ENCODE measurements at regions of chr16 and their contacts with region 1.

Region 1: DNA sequence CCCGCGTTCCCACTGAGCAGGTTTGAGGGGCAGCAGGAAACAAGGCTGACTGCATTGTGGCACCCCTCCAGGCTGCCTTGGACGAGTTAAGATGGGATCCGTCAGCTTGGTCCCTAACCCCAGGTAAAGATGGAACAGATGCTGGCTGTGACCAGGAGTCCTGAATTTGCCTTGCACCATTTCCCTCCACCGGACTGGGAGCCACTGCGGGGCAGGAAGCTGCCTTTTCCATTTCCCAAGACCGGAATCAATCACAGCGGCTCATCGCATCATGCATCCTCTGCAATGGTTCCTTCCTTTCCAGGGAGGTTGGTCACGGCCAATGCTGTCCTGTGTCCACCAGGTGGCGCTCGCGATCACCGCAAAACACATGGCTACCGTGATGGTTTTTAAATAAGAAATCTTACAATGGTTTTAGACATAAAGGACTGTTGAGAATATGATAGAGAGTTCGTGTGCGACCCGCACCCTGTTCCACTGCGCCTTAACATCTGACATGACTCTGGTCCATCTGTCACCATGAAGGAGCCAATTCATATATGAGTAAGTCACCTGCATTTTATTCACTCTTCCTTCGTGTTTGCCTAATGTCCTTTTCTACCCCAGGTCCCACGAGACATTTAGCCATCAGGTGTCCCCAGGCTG is 6.8 kb upstream of the MEAK7 start:
- DNase-seq: peak; percentile 65 to 89 (median 81)
- H3K4me3 ChIP-seq: peak overlapping the region; percentile 4
- H3K4me3 Mint-ChIP-seq: peak overlapping the region; percentile 7 to 57 (median 16)
- H3K27ac ChIP-seq: no peak overlapping the region
- H3K27ac Mint-ChIP-seq: peak overlapping the region in 7 of 8 donors; percentile 50 to 92 (median 83)
- H3K4me1 ChIP-seq: peaks cover 85% of the 10 kb centered on the region
- H3K4me1 Mint-ChIP-seq: peaks cover 57 to 71% (median 70%) of the 10 kb centered on the region in 3 donors
- H3K27me3 ChIP-seq: no peaks in the 10 kb centered on the region
- H3K27me3 Mint-ChIP-seq: peaks cover 0 to 4% of the 10 kb centered on the region in 2 donors

Region 2: DNA sequence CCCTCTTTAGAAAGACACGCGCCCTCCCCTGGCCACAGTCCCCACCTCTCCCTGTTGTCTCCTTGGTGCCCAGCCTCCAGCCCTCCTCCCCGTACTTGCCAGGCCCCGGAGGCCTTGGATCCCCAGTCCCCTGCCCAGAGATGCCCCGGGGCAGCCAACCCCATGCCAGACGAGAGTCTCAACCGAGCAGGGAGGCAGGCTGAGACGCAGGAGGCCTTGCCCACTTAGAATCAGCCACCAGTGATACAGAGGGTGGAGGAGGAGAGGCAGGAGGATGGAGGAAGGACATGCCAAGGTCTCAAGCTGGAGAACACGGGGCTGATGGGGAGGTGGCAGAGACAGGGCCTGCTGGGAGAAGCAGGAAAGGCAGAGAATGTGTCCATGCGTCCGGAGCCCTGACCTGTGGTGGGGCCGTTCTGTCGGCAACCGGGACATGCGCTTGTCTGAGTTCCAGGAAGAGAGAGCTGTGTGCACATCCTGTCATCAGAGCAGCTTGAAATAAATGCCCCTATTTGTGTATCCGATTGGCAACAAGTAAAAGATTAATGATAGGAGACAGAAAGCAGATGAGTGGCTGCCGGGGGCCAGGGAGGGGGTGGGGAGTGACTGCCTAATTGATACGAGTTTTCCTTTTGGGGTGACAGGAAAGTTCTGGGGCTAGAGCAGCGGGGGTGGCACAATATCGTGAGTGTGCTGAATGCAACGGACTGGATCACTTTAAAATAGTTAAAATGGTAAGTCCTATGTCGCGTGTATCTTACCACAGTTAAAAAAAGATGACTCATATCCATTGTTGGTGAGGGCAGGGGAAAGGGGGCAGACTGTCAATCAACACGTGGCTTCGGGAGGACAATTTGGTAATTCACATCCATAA is 37.9 kb after region 1 on chr16:
- CTCF ChIA-PET with region 1: interaction called, 11 read pairs
- POLR2A ChIA-PET with region 1: interaction called, 9 read pairs
- DNase-seq: peak; percentile 12 to 74 (median 49)
- H3K4me3 ChIP-seq: peak overlapping the region; percentile 51
- H3K4me3 Mint-ChIP-seq: peak overlapping the region; percentile 85 to 94 (median 89)
- H3K27ac ChIP-seq: peak overlapping the region; percentile 75
- H3K27ac Mint-ChIP-seq: peak overlapping the region; percentile 95 to 100 (median 97)
- H3K4me1 ChIP-seq: peaks cover 68% of the 10 kb centered on the region
- H3K4me1 Mint-ChIP-seq: peaks cover 49 to 79% (median 61%) of the 10 kb centered on the region in 3 donors
- H3K27me3 ChIP-seq: no peaks in the 10 kb centered on the region
- H3K27me3 Mint-ChIP-seq: no peaks in the 10 kb centered on the region

Region 3: DNA sequence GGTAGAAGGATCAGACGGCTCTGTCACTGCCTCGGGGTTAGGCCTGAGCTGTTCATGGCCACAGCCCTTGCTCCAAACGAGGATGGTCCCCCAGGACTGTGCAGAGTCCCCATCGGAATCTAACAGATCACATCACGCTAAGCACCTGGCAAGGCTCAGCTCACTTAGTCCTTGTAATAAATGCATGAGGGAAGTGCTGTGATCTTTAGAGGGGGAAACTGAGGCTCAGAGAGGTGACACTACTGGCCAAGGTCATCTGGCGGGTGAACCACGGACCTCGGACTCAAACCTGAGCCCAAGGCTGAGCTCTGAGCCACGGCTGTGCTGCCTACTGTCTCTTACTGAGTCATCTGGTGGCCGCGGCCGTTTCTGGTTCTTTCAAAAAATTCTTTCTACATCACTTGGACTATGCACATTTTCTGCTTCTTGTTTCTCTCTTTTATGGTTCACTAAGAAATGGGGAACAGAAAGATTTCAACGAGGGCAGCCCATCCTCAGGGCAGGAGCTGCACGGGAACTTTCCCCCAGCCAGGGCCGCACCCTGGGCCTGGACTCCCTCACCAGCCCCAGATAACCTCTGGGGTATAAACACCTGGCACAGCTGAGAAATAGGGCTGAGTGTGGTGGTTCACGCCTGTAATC is 51.0 kb after region 1 on chr16:
- CTCF ChIA-PET with region 1: interaction called, 10 read pairs
- POLR2A ChIA-PET with region 1: no interaction called
- DNase-seq: no peak
- H3K4me3 ChIP-seq: no peak overlapping the region
- H3K4me3 Mint-ChIP-seq: no peak overlapping the region
- H3K27ac ChIP-seq: no peak overlapping the region
- H3K27ac Mint-ChIP-seq: peak overlapping the region in 3 of 8 donors; percentile 5 to 66 (median 57)
- H3K4me1 ChIP-seq: no peaks in the 10 kb centered on the region
- H3K4me1 Mint-ChIP-seq: peaks cover 2 to 15% (median 14%) of the 10 kb centered on the region in 3 donors
- H3K27me3 ChIP-seq: no peaks in the 10 kb centered on the region
- H3K27me3 Mint-ChIP-seq: peaks cover 0 to 3% of the 10 kb centered on the region in 2 donors

Region 4: GRCh38 chr16:84575914-84576313 is 64.6 kb after region 1 on chr16:
- CTCF ChIA-PET with region 1: interaction called, 11 read pairs
- POLR2A ChIA-PET with region 1: no interaction called
- DNase-seq: no peak
- H3K4me3 ChIP-seq: no peak overlapping the region
- H3K4me3 Mint-ChIP-seq: no peak overlapping the region
- H3K27ac ChIP-seq: no peak overlapping the region
- H3K27ac Mint-ChIP-seq: peak overlapping the region in 7 of 8 donors; percentile 2 to 92 (median 74)
- H3K4me1 ChIP-seq: no peaks in the 10 kb centered on the region
- H3K4me1 Mint-ChIP-seq: peaks cover 57 to 86% (median 79%) of the 10 kb centered on the region in 3 donors
- H3K27me3 ChIP-seq: no peaks in the 10 kb centered on the region
- H3K27me3 Mint-ChIP-seq: no peaks in the 10 kb centered on the region

Region 5: GRCh38 chr16:84593825-84594724 is 82.8 kb after region 1 on chr16:
- CTCF ChIA-PET with region 1: interaction called, 20 read pairs
- POLR2A ChIA-PET with region 1: interaction called, 19 read pairs
- DNase-seq: peak; percentile 76 to 97 (median 83)
- H3K4me3 ChIP-seq: peak overlapping the region; percentile 53
- H3K4me3 Mint-ChIP-seq: peak overlapping the region; percentile 72 to 96 (median 88)
- H3K27ac ChIP-seq: peak overlapping the region; percentile 90
- H3K27ac Mint-ChIP-seq: peak overlapping the region; percentile 95 to 100 (median 99)
- H3K4me1 ChIP-seq: peaks cover 52% of the 10 kb centered on the region
- H3K4me1 Mint-ChIP-seq: peaks cover 64 to 85% (median 72%) of the 10 kb centered on the region in 3 donors
- H3K27me3 ChIP-seq: no peaks in the 10 kb centered on the region
- H3K27me3 Mint-ChIP-seq: peaks cover 0 to 3% of the 10 kb centered on the region in 2 donors

Region 6: GRCh38 chr16:84599521-84600202 is 88.4 kb after region 1 on chr16:
- CTCF ChIA-PET with region 1: interaction called, 20 read pairs
- POLR2A ChIA-PET with region 1: interaction called, 19 read pairs
- DNase-seq: peak in 2 of 5 donors; percentile 58 to 79
- H3K4me3 ChIP-seq: peak overlapping the region; percentile 54
- H3K4me3 Mint-ChIP-seq: peak overlapping the region; percentile 75 to 91 (median 84)
- H3K27ac ChIP-seq: peak overlapping the region; percentile 86
- H3K27ac Mint-ChIP-seq: peak overlapping the region; percentile 92 to 100 (median 95)
- H3K4me1 ChIP-seq: peaks cover 90% of the 10 kb centered on the region
- H3K4me1 Mint-ChIP-seq: peaks cover 84 to 96% (median 95%) of the 10 kb centered on the region in 3 donors
- H3K27me3 ChIP-seq: no peaks in the 10 kb centered on the region
- H3K27me3 Mint-ChIP-seq: peaks cover 0 to 2% of the 10 kb centered on the region in 2 donors